CD8-positive, alpha-beta T cell (primary cell): ENCODE measurements at regions of chr3 and their contacts with region 1.

Region 1: GRCh38 chr3:14947886-14948555 is 638 bp downstream of the NR2C2 start:
- DNase-seq: peak; percentile 92 to 98 (median 95)
- ATAC-seq: peak; percentile 88
- H3K4me3 ChIP-seq: peak overlapping the region; percentile 98 to 99
- H3K4me3 Mint-ChIP-seq: peak overlapping the region; percentile 99
- H3K27ac ChIP-seq: peak overlapping the region; percentile 97 to 99
- H3K27ac Mint-ChIP-seq: peak overlapping the region; percentile 100
- H3K4me1 ChIP-seq: peaks cover 22% of the 10 kb centered on the region
- H3K4me1 Mint-ChIP-seq: peaks cover 70% of the 10 kb centered on the region
- H3K27me3 ChIP-seq: no peaks in the 10 kb centered on the region
- H3K27me3 Mint-ChIP-seq: no peaks in the 10 kb centered on the region
- CTCF ChIP-seq: no peak

Region 2: GRCh38 chr3:13012228-13012691 is 1935.8 kb before region 1 on chr3:
- CTCF ChIA-PET with region 1: no interaction called
- POLR2A ChIA-PET with region 1: no interaction called
- intact Hi-C with region 1: loop called in 1 of 2 experiments (anchors 5 kb)
- DNase-seq: peak in 5 of 9 experiments; percentile 41 to 89 (median 70)
- ATAC-seq: peak; percentile 17
- H3K4me3 ChIP-seq: peak overlapping the region; percentile 4 to 12
- H3K4me3 Mint-ChIP-seq: peak overlapping the region; percentile 67
- H3K27ac ChIP-seq: peak overlapping the region; percentile 74 to 98
- H3K27ac Mint-ChIP-seq: peak overlapping the region; percentile 97
- H3K4me1 ChIP-seq: peaks cover 96% of the 10 kb centered on the region
- H3K4me1 Mint-ChIP-seq: peaks cover 80% of the 10 kb centered on the region
- H3K27me3 ChIP-seq: no peaks in the 10 kb centered on the region
- H3K27me3 Mint-ChIP-seq: no peaks in the 10 kb centered on the region
- CTCF ChIP-seq: no peak

Region 3: GRCh38 chr3:13479581-13480339 is 1468.3 kb before region 1 on chr3 and contains the start of gene HDAC11:
- CTCF ChIA-PET with region 1: no interaction called
- POLR2A ChIA-PET with region 1: no interaction called
- intact Hi-C with region 1: loop called (anchors 2 to 5 kb)
- DNase-seq: peak; percentile 95 to 99 (median 98)
- ATAC-seq: peak; percentile 93
- H3K4me3 ChIP-seq: peak within 1 kb of the TSS; percentile 83 to 96
- H3K4me3 Mint-ChIP-seq: peak within 1 kb of the TSS; percentile 95
- H3K27ac ChIP-seq: peak within 1 kb of the TSS; percentile 90
- H3K27ac Mint-ChIP-seq: peak within 1 kb of the TSS; percentile 96
- H3K4me1 ChIP-seq: peaks cover 18% of the 10 kb centered on the region
- H3K4me1 Mint-ChIP-seq: peaks cover 17% of the 10 kb centered on the region
- H3K27me3 ChIP-seq: no peaks in the 10 kb centered on the region
- H3K27me3 Mint-ChIP-seq: no peaks in the 10 kb centered on the region
- CTCF ChIP-seq: no peak
- total RNA-seq, gene HDAC11: 4.6 to 5.8 TPM

Region 4: GRCh38 chr3:13770170-13771169 is 1177.6 kb before region 1 on chr3:
- CTCF ChIA-PET with region 1: no interaction called
- POLR2A ChIA-PET with region 1: no interaction called
- intact Hi-C with region 1: no loop called
- DNase-seq: no peak
- ATAC-seq: no peak
- H3K4me3 ChIP-seq: no peak overlapping the region
- H3K4me3 Mint-ChIP-seq: no peak overlapping the region
- H3K27ac ChIP-seq: no peak overlapping the region
- H3K27ac Mint-ChIP-seq: no peak overlapping the region
- H3K4me1 ChIP-seq: peaks cover 13% of the 10 kb centered on the region
- H3K4me1 Mint-ChIP-seq: peaks cover 17% of the 10 kb centered on the region
- H3K27me3 ChIP-seq: no peaks in the 10 kb centered on the region
- H3K27me3 Mint-ChIP-seq: no peaks in the 10 kb centered on the region
- CTCF ChIP-seq: no peak

Region 5: GRCh38 chr3:14402304-14402811 is 545.7 kb before region 1 on chr3 and contains the start of gene SLC6A6:
- CTCF ChIA-PET with region 1: no interaction called
- POLR2A ChIA-PET with region 1: no interaction called
- intact Hi-C with region 1: loop called in 1 of 2 experiments (anchors 1 kb)
- DNase-seq: peak; percentile 87 to 98 (median 95)
- ATAC-seq: peak; percentile 79
- H3K4me3 ChIP-seq: peak within 1 kb of the TSS; percentile 72 to 85
- H3K4me3 Mint-ChIP-seq: peak within 1 kb of the TSS; percentile 97
- H3K27ac ChIP-seq: peak within 1 kb of the TSS; percentile 70 to 91
- H3K27ac Mint-ChIP-seq: peak within 1 kb of the TSS; percentile 96
- H3K4me1 ChIP-seq: peaks cover 34% of the 10 kb centered on the region
- H3K4me1 Mint-ChIP-seq: peaks cover 46% of the 10 kb centered on the region
- H3K27me3 ChIP-seq: no peaks in the 10 kb centered on the region
- H3K27me3 Mint-ChIP-seq: no peaks in the 10 kb centered on the region
- CTCF ChIP-seq: peak; percentile 46
- total RNA-seq, gene SLC6A6: 25.8 to 30.9 TPM

Region 6: GRCh38 chr3:14921078-14921616 is 26.9 kb before region 1 on chr3:
- CTCF ChIA-PET with region 1: interaction called, 4 read pairs
- POLR2A ChIA-PET with region 1: no interaction called
- intact Hi-C with region 1: loop called in 1 of 2 experiments (anchors 2 kb)
- DNase-seq: peak; percentile 68 to 93 (median 83)
- ATAC-seq: peak; percentile 99
- H3K4me3 ChIP-seq: no peak overlapping the region
- H3K4me3 Mint-ChIP-seq: no peak overlapping the region
- H3K27ac ChIP-seq: no peak overlapping the region
- H3K27ac Mint-ChIP-seq: no peak overlapping the region
- H3K4me1 ChIP-seq: peaks cover 4% of the 10 kb centered on the region
- H3K4me1 Mint-ChIP-seq: no peaks in the 10 kb centered on the region
- H3K27me3 ChIP-seq: no peaks in the 10 kb centered on the region
- H3K27me3 Mint-ChIP-seq: no peaks in the 10 kb centered on the region
- CTCF ChIP-seq: peak; percentile 99

Region 7: GRCh38 chr3:15064835-15065549 is 117.0 kb after region 1 on chr3 and contains the start of gene MRPS25:
- CTCF ChIA-PET with region 1: no interaction called
- POLR2A ChIA-PET with region 1: no interaction called
- intact Hi-C with region 1: loop called (anchors 1 kb)
- DNase-seq: peak; percentile 75 to 94 (median 89)
- ATAC-seq: peak; percentile 98
- H3K4me3 ChIP-seq: peak within 1 kb of the TSS; percentile 89 to 96
- H3K4me3 Mint-ChIP-seq: peak within 1 kb of the TSS; percentile 98
- H3K27ac ChIP-seq: peak within 1 kb of the TSS; percentile 78 to 85
- H3K27ac Mint-ChIP-seq: peak within 1 kb of the TSS; percentile 97
- H3K4me1 ChIP-seq: peaks cover 17% of the 10 kb centered on the region
- H3K4me1 Mint-ChIP-seq: peaks cover 26% of the 10 kb centered on the region
- H3K27me3 ChIP-seq: no peaks in the 10 kb centered on the region
- H3K27me3 Mint-ChIP-seq: no peaks in the 10 kb centered on the region
- CTCF ChIP-seq: no peak
- total RNA-seq, gene MRPS25: 51.3 to 56.2 TPM

Region 8: DNA sequence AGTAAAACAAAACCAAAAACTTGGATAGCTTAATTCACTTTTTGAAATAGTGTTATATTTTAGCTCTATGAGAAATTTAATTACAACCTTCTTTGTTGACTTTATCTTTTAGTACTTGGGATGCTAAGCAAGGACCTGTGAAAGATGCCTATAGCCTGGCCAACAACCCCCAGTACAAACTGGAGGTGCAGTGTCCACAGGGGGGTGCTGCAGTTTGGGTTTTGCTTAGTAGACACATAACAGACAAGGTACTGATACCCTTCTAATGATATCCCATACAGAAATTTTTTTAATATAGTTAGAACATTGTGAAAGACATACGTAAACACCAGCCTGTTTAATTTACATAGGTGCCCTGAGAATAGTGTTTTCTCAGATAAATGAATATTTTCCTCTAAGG is 293.3 kb after region 1 on chr3:
- CTCF ChIA-PET with region 1: no interaction called
- POLR2A ChIA-PET with region 1: no interaction called
- intact Hi-C with region 1: no loop called
- DNase-seq: peak in 6 of 9 experiments; percentile 15 to 68 (median 44)
- ATAC-seq: peak; percentile 62
- H3K4me3 ChIP-seq: no peak overlapping the region
- H3K4me3 Mint-ChIP-seq: no peak overlapping the region
- H3K27ac ChIP-seq: no peak overlapping the region
- H3K27ac Mint-ChIP-seq: no peak overlapping the region
- H3K4me1 ChIP-seq: no peaks in the 10 kb centered on the region
- H3K4me1 Mint-ChIP-seq: no peaks in the 10 kb centered on the region
- H3K27me3 ChIP-seq: no peaks in the 10 kb centered on the region
- H3K27me3 Mint-ChIP-seq: no peaks in the 10 kb centered on the region
- CTCF ChIP-seq: no peak

Region 9: GRCh38 chr3:15601397-15602145 is 653.5 kb after region 1 on chr3 and contains the starts of genes BTD and HACL1:
- CTCF ChIA-PET with region 1: no interaction called
- POLR2A ChIA-PET with region 1: no interaction called
- intact Hi-C with region 1: loop called (anchors 5 kb)
- DNase-seq: peak; percentile 96 to 100 (median 99)
- ATAC-seq: peak; percentile 89
- H3K4me3 ChIP-seq: peak within 1 kb of the TSS; percentile 82 to 94
- H3K4me3 Mint-ChIP-seq: peak within 1 kb of the TSS; percentile 100
- H3K27ac ChIP-seq: peak within 1 kb of the TSS; percentile 82 to 88
- H3K27ac Mint-ChIP-seq: peak within 1 kb of the TSS; percentile 99
- H3K4me1 ChIP-seq: peaks cover 19% of the 10 kb centered on the region
- H3K4me1 Mint-ChIP-seq: peaks cover 54% of the 10 kb centered on the region
- H3K27me3 ChIP-seq: no peaks in the 10 kb centered on the region
- H3K27me3 Mint-ChIP-seq: no peaks in the 10 kb centered on the region
- CTCF ChIP-seq: peak; percentile 24
- total RNA-seq, gene BTD: 9.1 to 11.3 TPM
- total RNA-seq, gene HACL1: 30.1 to 33.4 TPM

Region 10: GRCh38 chr3:15647611-15648167 is 699.7 kb after region 1 on chr3:
- CTCF ChIA-PET with region 1: no interaction called
- POLR2A ChIA-PET with region 1: no interaction called
- intact Hi-C with region 1: no loop called
- DNase-seq: peak; percentile 6 to 81 (median 55)
- ATAC-seq: peak; percentile 84
- H3K4me3 ChIP-seq: peak overlapping the region; percentile 7
- H3K4me3 Mint-ChIP-seq: peak overlapping the region; percentile 74
- H3K27ac ChIP-seq: no peak overlapping the region
- H3K27ac Mint-ChIP-seq: peak overlapping the region; percentile 62
- H3K4me1 ChIP-seq: peaks cover 43% of the 10 kb centered on the region
- H3K4me1 Mint-ChIP-seq: peaks cover 51% of the 10 kb centered on the region
- H3K27me3 ChIP-seq: no peaks in the 10 kb centered on the region
- H3K27me3 Mint-ChIP-seq: peaks cover 10% of the 10 kb centered on the region
- CTCF ChIP-seq: no peak